ENCODE measurements at regions of chr17 and their contacts with region 1.

Region 1: GRCh38 chr17:40647624-40648383 is at the start of gene SMARCE1:
- DNase-seq: peak; percentile 74 to 79 (median 76)
- ATAC-seq: peak; percentile 84
- H3K4me3 ChIP-seq: peak within 1 kb of the TSS; percentile 70
- H3K27ac ChIP-seq: peak within 1 kb of the TSS; percentile 96
- H3K4me1 ChIP-seq: peaks cover 11 to 21% of the 10 kb centered on the region in 2 experiments; a peak in 3 of 5 replicates
- H3K27me3 ChIP-seq: no peaks in the 10 kb centered on the region
- CTCF ChIP-seq: no peak; a peak in 1 of 6 replicates
- EP300 ChIP-seq: peak; percentile 99
- POLR2A ChIP-seq: peak; percentile 86
- RAD21 ChIP-seq: no peak
- polyA plus RNA-seq, gene SMARCE1: 115 to 135 TPM

Region 2: GRCh38 chr17:40499551-40500174 is 148.1 kb before region 1 on chr17:
- CTCF ChIA-PET with region 1: no interaction called
- POLR2A ChIA-PET with region 1: no interaction called
- in situ Hi-C with region 1: no loop called
- intact Hi-C with region 1: no loop called
- DNase-seq: peak in 2 of 4 experiments; percentile 51 to 55
- ATAC-seq: peak; percentile 28; the same call in 1 of the 3 replicates
- H3K4me3 ChIP-seq: no peak overlapping the region
- H3K27ac ChIP-seq: no peak overlapping the region
- H3K4me1 ChIP-seq: peaks cover 0 to 13% of the 10 kb centered on the region in 2 experiments; a peak in 2 of 5 replicates
- H3K27me3 ChIP-seq: no peaks in the 10 kb centered on the region; a peak in 1 of 5 replicates
- CTCF ChIP-seq: no peak
- EP300 ChIP-seq: no peak
- POLR2A ChIP-seq: no peak
- RAD21 ChIP-seq: no peak

Region 3: DNA sequence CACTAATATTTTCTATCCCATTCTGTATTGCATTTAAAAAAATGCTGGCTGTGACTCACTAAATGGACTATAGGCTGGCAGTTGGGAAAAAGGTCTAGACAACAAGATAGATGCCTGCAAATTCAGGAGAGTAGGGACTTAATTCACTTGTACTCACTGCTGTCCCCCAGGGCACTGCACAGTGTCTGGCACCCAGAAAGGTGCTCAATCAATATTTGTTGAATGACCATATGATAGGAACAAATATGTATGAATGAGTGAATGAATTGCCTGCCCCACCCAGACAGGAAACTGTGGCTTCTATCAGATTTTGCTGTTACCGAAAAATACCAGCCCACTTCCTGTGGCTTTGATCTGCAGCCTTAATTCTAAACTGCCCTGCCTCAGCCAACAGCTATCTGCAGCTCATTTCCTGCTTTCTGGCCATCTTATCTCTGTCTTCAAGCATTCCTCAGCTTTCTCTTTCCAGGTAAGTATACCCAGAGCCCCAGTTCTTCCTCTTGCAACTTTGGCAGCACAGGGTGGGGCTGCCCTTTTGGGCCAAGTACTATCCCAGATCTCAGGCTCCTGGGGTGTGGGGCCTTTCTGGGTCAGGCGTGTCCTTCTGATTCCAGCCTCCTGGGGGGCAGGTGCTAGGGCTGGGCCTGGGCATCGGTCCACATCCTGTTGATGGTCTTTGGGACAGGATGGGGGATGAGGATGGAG is 131.1 kb before region 1 on chr17:
- CTCF ChIA-PET with region 1: no interaction called
- POLR2A ChIA-PET with region 1: no interaction called
- in situ Hi-C with region 1: no loop called
- intact Hi-C with region 1: no loop called
- DNase-seq: peak; percentile 66 to 88 (median 72)
- ATAC-seq: peak; percentile 79
- H3K4me3 ChIP-seq: no peak overlapping the region
- H3K27ac ChIP-seq: peak overlapping the region; percentile 75
- H3K4me1 ChIP-seq: peaks cover 30 to 45% of the 10 kb centered on the region in 2 experiments
- H3K27me3 ChIP-seq: no peaks in the 10 kb centered on the region
- CTCF ChIP-seq: no peak
- EP300 ChIP-seq: peak; percentile 98
- POLR2A ChIP-seq: no peak
- RAD21 ChIP-seq: no peak

Region 4: GRCh38 chr17:40632216-40632615 is 15.6 kb before region 1 on chr17:
- CTCF ChIA-PET with region 1: no interaction called
- POLR2A ChIA-PET with region 1: interaction called, 55 read pairs
- in situ Hi-C with region 1: no loop called
- intact Hi-C with region 1: no loop called
- DNase-seq: no peak
- ATAC-seq: no peak
- H3K4me3 ChIP-seq: no peak overlapping the region
- H3K27ac ChIP-seq: no peak overlapping the region
- H3K4me1 ChIP-seq: no peaks in the 10 kb centered on the region
- H3K27me3 ChIP-seq: no peaks in the 10 kb centered on the region
- CTCF ChIP-seq: no peak
- EP300 ChIP-seq: no peak
- POLR2A ChIP-seq: no peak
- RAD21 ChIP-seq: no peak

Region 5: GRCh38 chr17:40671282-40671681 is 23.5 kb after region 1 on chr17:
- CTCF ChIA-PET with region 1: no interaction called
- POLR2A ChIA-PET with region 1: no interaction called
- in situ Hi-C with region 1: no loop called
- intact Hi-C with region 1: no loop called
- DNase-seq: no peak
- ATAC-seq: no peak
- H3K4me3 ChIP-seq: no peak overlapping the region
- H3K27ac ChIP-seq: no peak overlapping the region
- H3K4me1 ChIP-seq: no peaks in the 10 kb centered on the region
- H3K27me3 ChIP-seq: peaks cover 19 to 30% of the 10 kb centered on the region in 2 experiments
- CTCF ChIP-seq: no peak
- EP300 ChIP-seq: no peak
- POLR2A ChIP-seq: no peak
- RAD21 ChIP-seq: no peak

Region 6: DNA sequence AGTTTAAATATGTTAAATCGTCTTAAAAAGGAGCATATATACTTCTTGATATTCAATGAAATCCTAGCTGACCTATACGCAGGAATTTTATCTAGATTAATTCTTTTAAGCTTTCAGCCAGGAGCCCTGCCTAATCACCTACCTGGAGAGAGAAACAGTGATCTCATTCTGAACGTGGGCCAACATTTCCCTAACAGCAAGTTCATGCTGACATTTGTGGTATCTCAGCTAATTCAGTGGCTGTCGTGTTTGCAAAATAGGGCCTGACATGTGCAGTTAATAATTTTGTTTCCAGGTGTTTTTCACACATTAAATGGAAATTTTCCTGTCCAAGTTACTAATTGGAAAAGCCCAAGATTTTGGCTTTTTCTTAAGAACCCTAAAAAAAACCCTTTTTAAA is 38.4 kb after region 1 on chr17:
- CTCF ChIA-PET with region 1: no interaction called
- POLR2A ChIA-PET with region 1: no interaction called
- in situ Hi-C with region 1: no loop called
- intact Hi-C with region 1: no loop called
- DNase-seq: no peak
- ATAC-seq: no peak
- H3K4me3 ChIP-seq: no peak overlapping the region
- H3K27ac ChIP-seq: no peak overlapping the region
- H3K4me1 ChIP-seq: no peaks in the 10 kb centered on the region
- H3K27me3 ChIP-seq: peaks cover 9 to 21% of the 10 kb centered on the region in 2 experiments; a peak in 4 of 5 replicates
- CTCF ChIP-seq: no peak
- EP300 ChIP-seq: no peak
- POLR2A ChIP-seq: no peak
- RAD21 ChIP-seq: no peak

Measured in K562 (cell line).